ENCODE measurements at regions of chr6 and their contacts with region 1.

Region 1: DNA sequence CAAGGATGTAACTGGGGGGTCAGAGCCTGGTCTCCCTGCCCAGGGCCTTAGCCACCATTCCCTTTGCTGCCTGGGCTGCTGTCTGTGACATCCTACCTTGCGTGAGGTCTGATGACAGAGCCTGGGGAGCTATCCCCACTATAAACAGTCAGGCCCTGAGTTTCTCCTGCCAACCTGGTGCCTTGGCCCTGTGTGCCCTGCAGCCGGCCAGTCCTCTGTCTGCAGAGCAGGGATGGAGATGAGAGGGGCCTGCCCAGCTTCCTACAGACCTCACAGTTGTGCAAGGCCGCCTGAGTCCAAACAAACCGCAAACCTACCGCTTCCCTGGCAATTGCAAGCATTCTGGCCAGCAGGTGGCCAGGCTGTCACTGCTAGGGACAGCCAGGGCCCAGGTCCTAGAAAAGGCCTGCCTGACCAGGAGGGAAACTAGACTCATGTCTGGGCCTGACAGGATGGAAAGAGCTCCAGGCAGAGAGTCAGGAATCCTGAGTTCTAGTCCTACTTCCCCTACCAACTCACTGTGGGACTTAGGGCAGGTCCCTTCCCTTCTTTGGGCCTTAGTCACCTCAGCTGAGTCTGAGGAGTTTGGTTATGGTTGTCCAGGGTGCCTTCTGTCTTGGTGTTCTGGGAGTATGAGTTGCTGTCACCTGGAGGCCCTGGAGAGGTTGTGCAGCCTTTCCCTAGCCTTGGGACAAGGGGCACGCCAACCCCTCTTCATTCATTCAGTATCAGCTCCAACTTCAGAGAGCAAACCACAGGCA is 86.2 kb downstream of the VEGFA start:
- DNase-seq: peak; percentile 74
- H3K4me3 ChIP-seq: no peak overlapping the region
- H3K27ac ChIP-seq: peak overlapping the region in 1 of 2 experiments; percentile 92; a peak in 2 of 4 replicates
- H3K4me1 ChIP-seq: peaks cover 0 to 41% of the 10 kb centered on the region in 2 experiments; a peak in 1 of 4 replicates
- H3K27me3 ChIP-seq: no peaks in the 10 kb centered on the region
- CTCF ChIP-seq: peak; percentile 42
- EP300 ChIP-seq: no peak
- RAD21 ChIP-seq: peak; percentile 74

Region 2: DNA sequence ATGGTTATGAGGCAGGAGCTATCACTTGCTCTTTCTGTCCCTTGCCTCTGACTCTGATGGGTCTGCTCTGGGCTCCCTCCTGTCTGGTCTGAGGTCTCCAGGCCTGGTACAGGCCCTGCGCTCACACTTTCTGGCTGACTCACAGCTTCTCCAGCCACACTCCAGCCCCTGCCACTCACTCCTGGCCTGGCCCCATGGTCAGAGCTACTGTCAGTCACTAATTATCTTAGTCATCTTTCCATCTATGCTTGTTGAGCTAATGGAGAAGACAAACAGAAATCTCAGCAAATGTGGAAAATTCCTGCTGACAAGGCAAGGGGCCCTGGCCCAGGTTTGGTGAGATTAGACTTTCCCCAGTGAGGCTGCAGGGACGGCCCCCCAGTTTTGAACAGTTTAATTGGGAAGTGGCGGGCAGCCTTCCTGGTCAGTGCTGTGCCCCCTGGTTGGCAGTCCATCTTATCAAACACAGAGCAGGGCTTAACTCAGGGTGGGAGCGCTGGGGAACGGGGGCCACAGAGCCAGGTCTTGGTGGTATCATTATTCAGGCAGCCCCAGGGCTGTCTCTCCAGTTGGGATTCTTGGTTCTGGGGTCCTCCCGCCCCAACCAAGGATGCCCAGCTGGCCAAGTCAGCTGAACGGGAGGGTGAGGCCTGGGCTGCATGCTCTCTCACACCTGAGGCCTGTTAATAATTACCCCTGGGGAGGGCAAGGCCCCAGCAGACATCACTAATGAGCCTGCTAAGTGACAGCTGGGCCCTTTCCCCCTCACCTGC is 22.8 kb before region 1 on chr6:
- CTCF ChIA-PET with region 1: interaction called, 10 read pairs
- POLR2A ChIA-PET with region 1: no interaction called
- DNase-seq: peak; percentile 61
- H3K4me3 ChIP-seq: no peak overlapping the region
- H3K27ac ChIP-seq: peak overlapping the region in 1 of 2 experiments; percentile 30; a peak in 1 of 4 replicates
- H3K4me1 ChIP-seq: peaks cover 1 to 30% of the 10 kb centered on the region in 2 experiments; a peak in 2 of 4 replicates
- H3K27me3 ChIP-seq: no peaks in the 10 kb centered on the region
- CTCF ChIP-seq: no peak
- EP300 ChIP-seq: no peak
- RAD21 ChIP-seq: no peak

Region 3: DNA sequence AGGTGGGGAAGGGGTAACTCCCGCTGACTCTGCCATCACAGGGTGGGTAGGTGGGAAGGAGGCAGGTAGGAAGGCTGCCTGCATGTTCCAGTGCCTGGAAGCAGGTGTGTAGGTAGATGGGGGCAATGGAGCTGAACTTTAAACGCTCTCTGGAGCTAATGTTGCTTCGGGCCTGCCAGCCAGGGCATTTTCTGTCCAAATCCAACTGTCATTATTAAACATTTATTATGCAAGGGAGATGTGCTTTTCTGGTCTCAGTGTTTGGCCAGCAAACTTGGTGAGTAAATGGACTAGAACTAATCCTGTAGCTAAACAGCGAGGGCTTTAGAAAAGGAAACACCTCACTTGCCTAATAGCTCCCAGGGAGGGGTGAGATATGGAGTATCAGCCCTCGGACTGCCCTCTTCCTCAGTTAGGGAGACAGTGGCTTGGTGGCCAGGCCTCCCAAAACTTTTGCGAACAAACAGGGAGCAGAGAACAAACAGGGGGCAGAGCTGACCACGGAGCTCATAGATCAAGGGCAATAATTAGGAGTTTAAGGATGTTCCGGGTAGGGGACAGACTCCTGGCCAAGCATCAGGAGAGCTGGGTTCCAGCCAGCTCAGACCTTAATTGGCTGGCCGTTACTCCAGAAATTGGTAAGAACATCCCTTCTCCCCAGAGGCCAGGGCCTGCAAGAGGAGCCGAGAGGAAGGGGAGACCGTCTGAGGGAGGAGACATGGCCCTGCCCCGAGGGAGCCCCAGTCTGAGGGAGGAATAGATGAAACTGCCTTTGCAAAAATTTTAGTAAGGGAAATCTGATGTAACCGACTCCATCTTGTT is 44.9 kb after region 1 on chr6:
- CTCF ChIA-PET with region 1: interaction called, 21 read pairs
- POLR2A ChIA-PET with region 1: interaction called, 3 read pairs
- DNase-seq: no peak
- H3K4me3 ChIP-seq: no peak overlapping the region
- H3K27ac ChIP-seq: peak overlapping the region in 1 of 2 experiments; percentile 91; a peak in 2 of 4 replicates
- H3K4me1 ChIP-seq: peaks cover 0 to 61% of the 10 kb centered on the region in 2 experiments; a peak in 2 of 4 replicates
- H3K27me3 ChIP-seq: no peaks in the 10 kb centered on the region
- CTCF ChIP-seq: no peak
- EP300 ChIP-seq: no peak
- RAD21 ChIP-seq: no peak

Region 4: DNA sequence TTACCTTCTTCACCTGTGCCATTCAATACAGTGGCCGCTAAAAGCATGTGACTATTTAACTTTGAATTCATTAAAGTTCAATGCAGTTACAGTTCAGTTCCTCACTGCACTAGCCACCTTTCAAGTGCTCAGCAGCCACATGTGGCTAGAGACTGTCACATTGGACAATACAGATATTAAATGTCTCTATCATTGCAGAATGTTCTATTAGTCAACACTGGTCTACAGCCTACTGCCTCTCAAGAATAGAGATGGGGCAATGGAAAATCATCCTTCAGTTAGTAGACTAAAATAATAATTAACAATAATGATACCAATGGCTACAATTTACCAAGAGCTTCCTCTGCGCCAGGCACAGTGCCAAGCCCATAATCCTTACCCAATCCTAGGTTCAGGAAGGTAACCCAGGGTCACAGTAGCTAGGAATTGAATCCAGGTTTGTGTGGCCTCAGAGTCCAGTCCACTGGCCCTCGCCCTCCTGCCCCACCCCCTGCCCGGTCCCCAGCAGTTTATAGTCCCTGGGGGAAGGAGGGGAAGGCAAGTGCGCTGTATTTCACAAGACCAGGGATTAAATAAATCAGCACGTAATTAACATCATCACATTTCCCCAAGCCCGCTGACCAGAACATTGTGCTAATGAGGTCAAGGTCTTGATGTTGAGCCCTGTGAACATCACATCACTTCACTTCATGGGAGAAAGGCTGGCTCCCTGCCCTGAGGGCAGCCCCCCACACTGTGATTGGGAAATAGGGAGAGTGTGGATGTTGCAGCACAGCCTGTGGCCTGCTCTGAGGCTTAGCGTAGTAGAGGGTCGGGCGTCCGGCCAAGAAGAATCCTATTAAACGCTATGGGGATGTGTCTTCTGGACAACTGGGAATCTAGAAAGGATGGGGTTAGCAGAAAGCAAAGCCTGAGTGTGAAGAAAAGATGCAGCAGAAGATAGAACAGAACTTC is 61.0 kb after region 1 on chr6:
- CTCF ChIA-PET with region 1: interaction called, 16 read pairs
- POLR2A ChIA-PET with region 1: no interaction called
- DNase-seq: no peak
- H3K4me3 ChIP-seq: no peak overlapping the region
- H3K27ac ChIP-seq: peak overlapping the region in 1 of 2 experiments; percentile 90; a peak in 2 of 4 replicates
- H3K4me1 ChIP-seq: peaks cover 19 to 56% of the 10 kb centered on the region in 2 experiments
- H3K27me3 ChIP-seq: no peaks in the 10 kb centered on the region
- CTCF ChIP-seq: no peak
- EP300 ChIP-seq: no peak
- RAD21 ChIP-seq: no peak

Region 5: DNA sequence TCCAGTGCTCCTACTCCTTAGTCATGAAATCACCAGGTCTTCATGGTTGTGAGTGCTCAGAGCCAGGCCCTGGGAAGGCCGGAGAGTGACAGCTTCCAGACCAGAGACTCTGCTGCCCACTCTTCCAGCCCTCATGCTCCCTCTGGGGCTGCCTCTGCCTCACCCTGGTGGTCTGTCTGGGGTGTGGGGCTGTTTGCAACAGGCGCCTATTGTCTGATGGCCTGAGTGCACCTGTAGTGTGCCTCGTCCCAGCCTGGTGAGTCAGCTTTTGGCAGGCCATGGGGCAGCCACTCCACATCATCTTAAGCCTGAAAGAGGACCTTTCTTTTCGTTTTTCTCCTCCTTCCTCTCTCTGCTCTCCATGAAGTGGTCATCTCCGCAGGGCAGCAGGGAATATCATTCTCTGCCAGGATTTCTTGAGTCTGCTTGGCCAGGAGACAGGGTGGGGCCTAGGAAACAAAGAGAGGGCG is 87.6 kb after region 1 on chr6:
- CTCF ChIA-PET with region 1: interaction called, 71 read pairs
- POLR2A ChIA-PET with region 1: interaction called, 3 read pairs
- DNase-seq: no peak
- H3K4me3 ChIP-seq: no peak overlapping the region
- H3K27ac ChIP-seq: peak overlapping the region in 1 of 2 experiments; percentile 100; a peak in 2 of 4 replicates
- H3K4me1 ChIP-seq: peaks cover 0 to 51% of the 10 kb centered on the region in 2 experiments; a peak in 3 of 4 replicates
- H3K27me3 ChIP-seq: no peaks in the 10 kb centered on the region
- CTCF ChIP-seq: no peak
- EP300 ChIP-seq: no peak
- RAD21 ChIP-seq: no peak

Measured in SK-N-SH (cell line).